ENCODE measurements at regions of chr5 and their contacts with region 1.

Region 1: GRCh38 chr5:57435701-57436134 is 46.9 kb downstream of the ACTBL2 start:
- DNase-seq: peak; percentile 58 to 99
- H3K4me3 ChIP-seq: no peak overlapping the region
- H3K27ac ChIP-seq: peak overlapping the region; percentile 99
- H3K4me1 ChIP-seq: peaks cover 42% of the 10 kb centered on the region
- H3K27me3 ChIP-seq: no peaks in the 10 kb centered on the region
- CTCF ChIP-seq: no peak

Region 2: GRCh38 chr5:57007344-57007743 is 428.4 kb before region 1 on chr5:
- CTCF ChIA-PET with region 1: no interaction called
- POLR2A ChIA-PET with region 1: no interaction called
- intact Hi-C with region 1: no loop called
- DNase-seq: no peak
- H3K4me3 ChIP-seq: no peak overlapping the region
- H3K27ac ChIP-seq: no peak overlapping the region
- H3K4me1 ChIP-seq: peaks cover 43% of the 10 kb centered on the region
- H3K27me3 ChIP-seq: no peaks in the 10 kb centered on the region
- CTCF ChIP-seq: no peak

Region 3: DNA sequence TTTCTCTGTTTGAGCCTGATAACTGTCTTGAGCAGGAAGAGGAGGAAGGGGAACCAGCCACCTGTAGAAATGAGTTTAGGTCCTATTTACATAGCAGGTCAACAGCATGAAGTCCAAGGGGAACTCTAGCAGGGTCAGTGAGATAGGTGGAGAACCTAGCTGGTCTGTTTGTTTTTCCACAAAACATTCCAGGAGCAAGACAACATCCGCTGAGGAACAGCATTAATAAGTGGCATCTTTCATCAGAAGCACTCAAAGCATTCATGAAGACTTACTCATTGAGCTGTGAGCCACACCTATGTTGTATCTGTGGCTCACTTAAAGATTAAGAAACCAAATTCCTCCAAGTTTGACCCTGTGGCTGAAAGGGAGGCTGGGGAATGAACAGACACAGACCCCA is 69.0 kb before region 1 on chr5:
- CTCF ChIA-PET with region 1: no interaction called
- POLR2A ChIA-PET with region 1: interaction called, 4 read pairs
- intact Hi-C with region 1: loop called (anchors 1 kb)
- DNase-seq: peak; percentile 55 to 98
- H3K4me3 ChIP-seq: no peak overlapping the region
- H3K27ac ChIP-seq: peak overlapping the region; percentile 92
- H3K4me1 ChIP-seq: peaks cover 58% of the 10 kb centered on the region
- H3K27me3 ChIP-seq: no peaks in the 10 kb centered on the region
- CTCF ChIP-seq: no peak

Measured in PC-9 (cell line).